GM23248 (cell line): ENCODE measurements at regions of chr2 and their contacts with region 1.

Region 1: DNA sequence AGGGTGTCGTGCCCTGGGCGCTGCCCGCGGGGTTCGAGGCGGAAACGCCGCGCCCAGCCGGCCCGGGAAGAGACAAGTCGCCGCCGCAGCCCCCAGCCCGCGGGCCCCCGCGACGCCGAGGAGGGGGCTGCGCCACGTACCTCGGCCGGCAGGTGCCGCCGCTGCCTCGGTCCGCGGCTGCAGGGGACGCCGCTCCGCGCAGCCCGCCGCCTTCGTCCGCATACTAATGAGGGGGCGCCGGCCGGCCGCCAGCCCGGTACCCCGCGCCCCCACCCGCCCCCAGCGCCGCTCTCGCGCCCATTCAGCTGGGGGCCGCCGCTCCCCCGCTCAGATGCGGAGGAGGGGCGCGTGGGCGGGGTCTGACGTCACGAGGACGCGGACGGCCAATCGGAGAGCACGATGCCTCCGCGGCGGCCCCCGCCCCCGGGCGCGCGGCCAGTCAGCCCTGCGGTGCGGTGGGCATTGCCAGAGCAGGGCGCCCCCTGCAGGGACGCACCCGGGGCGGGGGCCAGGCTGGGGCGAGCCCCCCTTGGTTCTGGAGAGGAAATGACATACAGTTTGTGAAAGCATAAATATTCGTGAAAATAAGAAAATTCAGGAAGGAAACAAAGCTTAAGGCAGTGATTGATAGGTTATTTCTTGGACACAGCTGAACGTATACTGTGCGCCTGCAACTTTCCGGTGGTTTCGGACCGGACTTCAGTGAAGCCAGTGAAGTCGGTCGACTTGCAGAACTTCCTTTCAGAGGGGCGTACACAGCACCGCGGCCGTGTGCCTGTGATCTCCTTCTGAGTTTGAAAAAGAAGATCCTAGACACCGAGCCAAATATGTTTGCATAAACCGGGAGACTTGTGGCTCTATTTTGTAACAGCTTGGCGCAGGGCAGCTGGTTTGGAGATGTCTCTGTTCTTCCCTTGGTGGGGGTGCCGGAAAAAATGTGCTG is at the start of gene ST3GAL5:
- DNase-seq: peak; percentile 90
- H3K4me3 ChIP-seq: peak within 1 kb of the TSS; percentile 85
- H3K27ac ChIP-seq: peak within 1 kb of the TSS; percentile 78
- H3K4me1 ChIP-seq: peaks cover 51% of the 10 kb centered on the region
- H3K27me3 ChIP-seq: no peaks in the 10 kb centered on the region
- total RNA-seq, gene ST3GAL5: 21.0 and 27.2 TPM in 2 replicates

Region 2: DNA sequence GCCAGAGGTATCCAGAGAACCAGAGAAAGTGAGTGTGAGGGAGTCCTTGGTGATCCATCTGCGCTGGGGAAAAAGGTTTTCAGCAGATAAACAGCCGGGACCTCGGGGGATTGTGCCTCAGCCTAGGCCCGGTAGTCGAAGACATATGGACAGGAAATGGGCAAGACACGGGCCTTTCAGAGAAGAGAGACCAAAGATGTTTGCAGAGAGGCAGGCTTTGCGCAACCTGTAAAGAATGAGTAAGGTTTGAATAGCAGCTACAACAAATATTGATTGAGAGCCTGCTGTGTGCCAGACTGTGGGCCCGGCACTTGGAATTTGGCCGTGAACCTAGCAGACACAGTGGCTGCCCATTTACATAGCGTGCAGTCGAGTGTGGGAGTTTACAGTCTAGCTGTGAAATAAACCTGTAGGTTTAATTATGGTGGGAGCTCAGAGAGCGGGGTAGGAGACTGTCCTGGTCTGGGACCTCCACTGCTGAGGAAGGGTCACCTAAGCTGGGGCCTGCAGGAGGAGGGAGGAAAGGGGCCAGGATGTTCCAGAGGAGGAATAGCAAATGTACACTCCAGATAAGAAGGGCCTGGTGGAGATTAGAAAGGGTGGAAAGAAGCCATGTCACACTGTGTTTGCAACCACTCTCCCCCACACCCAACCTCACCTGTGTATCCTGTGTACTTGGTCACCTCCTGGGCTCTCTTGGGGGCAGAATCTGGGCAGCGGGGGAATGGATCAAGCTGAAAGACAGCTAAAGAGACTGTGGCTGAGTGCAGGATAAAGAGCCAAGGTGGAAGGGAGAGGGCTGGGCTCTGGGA is 467.5 kb before region 1 on chr2:
- in situ Hi-C with region 1: no loop called
- DNase-seq: peak; percentile 56
- H3K4me3 ChIP-seq: no peak overlapping the region
- H3K27ac ChIP-seq: peak overlapping the region; percentile 22
- H3K4me1 ChIP-seq: peaks cover 20% of the 10 kb centered on the region
- H3K27me3 ChIP-seq: no peaks in the 10 kb centered on the region

Region 3: DNA sequence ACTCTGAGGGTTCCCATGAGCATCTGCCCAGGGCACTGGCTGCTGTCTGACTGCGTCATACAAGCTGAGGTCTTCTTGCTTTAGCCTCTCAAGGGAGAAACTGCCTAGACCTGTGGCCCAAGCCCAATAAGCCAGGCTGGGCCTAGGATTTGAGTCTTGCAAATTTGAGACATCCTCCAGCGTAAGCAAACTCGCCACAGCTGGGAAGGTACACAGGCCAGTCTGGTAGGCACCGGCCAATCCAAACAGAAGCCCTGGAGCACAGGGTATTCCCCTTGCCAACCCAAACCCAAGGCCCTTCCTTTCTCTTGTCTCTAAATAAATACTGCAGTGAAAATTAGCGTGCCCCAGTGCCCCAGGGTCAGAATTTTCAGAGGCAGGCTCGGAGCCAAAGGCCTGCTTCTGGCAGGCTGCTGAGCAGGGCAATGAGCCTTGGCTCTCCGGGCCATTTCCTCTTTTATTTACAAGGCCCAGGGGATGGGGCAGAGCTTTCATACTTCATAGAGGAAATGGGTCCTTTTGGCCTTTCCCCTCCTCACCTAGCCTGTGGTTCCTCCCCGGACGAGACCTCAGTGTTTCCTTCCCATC is 183.4 kb after region 1 on chr2:
- in situ Hi-C with region 1: loop called (anchors 25 kb)
- DNase-seq: no peak
- H3K4me3 ChIP-seq: no peak overlapping the region
- H3K27ac ChIP-seq: no peak overlapping the region
- H3K4me1 ChIP-seq: peaks cover 18% of the 10 kb centered on the region
- H3K27me3 ChIP-seq: no peaks in the 10 kb centered on the region